K562 (cell line): ENCODE measurements at regions of chr12 and their contacts with region 1.

Region 1: DNA sequence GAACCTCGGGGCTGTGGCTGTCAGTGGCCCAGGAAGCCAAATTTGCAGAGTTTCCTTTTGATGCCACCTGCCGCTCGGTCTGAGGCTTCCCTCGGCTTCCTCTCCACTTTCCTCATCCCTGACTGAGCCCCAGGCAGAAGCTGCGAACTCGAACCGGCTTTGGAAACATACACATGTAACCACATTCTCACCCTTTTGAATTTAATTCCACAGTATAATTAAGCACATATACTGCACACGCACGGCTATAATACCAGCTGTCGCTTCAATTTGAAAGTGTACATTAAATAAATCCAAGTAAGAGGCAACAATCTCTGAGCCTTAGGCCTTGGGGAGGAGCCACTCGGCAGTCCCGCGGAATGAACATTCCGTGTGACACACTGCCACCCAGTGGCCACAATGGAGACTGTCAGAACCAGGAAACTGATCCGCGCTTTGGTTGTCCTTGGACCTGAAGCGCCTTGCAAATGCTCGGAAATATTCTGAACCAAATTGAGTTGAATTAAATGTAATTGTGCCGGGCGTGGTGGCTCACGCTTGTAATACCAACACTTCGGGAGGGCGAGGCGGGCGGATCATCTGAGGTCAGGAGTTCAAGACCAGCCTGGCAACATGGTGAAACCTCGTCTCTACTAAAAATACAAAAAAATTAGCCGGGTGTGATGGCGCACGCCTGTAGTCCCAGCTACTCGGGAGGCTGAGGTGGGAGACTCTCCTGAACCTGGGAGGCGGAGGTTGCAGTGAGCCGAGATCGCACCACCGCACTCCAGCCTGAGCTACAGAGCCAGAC is 117.9 kb upstream of the TMPO start:
- DNase-seq: peak; percentile 76 to 85 (median 80)
- ATAC-seq: peak; percentile 94
- H3K4me3 ChIP-seq: no peak overlapping the region
- H3K27ac ChIP-seq: no peak overlapping the region
- H3K4me1 ChIP-seq: peaks cover 0 to 14% of the 10 kb centered on the region in 2 experiments; a peak in 3 of 5 replicates
- H3K27me3 ChIP-seq: no peaks in the 10 kb centered on the region
- CTCF ChIP-seq: peak; percentile 85 to 92 (median 90)
- EP300 ChIP-seq: no peak
- POLR2A ChIP-seq: no peak
- RAD21 ChIP-seq: peak; percentile 79 to 87

Region 2: DNA sequence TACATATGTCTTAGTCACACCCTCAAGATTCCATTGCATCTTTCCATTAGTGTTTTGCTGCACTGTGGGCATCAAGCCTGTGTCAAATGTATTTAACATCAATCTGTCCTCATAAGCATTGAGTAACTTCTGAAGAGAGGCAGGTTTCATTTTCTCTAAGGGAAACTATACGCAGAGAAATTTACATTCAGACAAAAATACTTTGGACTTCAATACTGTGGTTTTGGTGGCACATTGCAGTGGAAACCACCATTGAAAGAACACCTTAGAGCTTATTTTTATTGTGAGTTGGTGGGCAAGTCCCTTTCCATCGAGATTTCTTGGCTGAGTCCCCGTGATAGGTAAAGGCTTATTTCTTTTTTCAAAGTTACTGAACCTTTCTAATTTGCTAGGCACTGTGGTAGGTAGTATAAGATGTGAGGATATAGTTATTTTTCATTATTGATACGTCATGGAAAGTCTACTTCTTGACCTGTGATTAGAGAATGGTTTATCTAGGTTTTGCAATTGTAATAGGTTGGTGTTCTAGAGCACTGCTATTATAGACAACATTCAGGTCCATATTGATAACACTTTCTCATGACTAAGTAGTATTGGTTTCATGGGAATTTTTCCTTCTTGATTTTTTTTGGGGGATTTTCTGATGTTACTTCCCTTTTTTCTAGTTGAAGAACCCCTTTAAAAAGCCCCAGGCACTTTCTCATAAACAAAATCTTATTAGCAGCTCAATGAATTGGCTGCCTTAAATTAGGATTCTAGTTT is 1826.2 kb before region 1 on chr12:
- CTCF ChIA-PET with region 1: no interaction called
- POLR2A ChIA-PET with region 1: no interaction called
- in situ Hi-C with region 1: loop called (anchors 25 kb)
- intact Hi-C with region 1: no loop called
- DNase-seq: no peak
- ATAC-seq: no peak
- H3K4me3 ChIP-seq: no peak overlapping the region
- H3K27ac ChIP-seq: no peak overlapping the region
- H3K4me1 ChIP-seq: no peaks in the 10 kb centered on the region
- H3K27me3 ChIP-seq: no peaks in the 10 kb centered on the region
- CTCF ChIP-seq: no peak
- EP300 ChIP-seq: no peak
- POLR2A ChIP-seq: no peak
- RAD21 ChIP-seq: no peak

Region 3: DNA sequence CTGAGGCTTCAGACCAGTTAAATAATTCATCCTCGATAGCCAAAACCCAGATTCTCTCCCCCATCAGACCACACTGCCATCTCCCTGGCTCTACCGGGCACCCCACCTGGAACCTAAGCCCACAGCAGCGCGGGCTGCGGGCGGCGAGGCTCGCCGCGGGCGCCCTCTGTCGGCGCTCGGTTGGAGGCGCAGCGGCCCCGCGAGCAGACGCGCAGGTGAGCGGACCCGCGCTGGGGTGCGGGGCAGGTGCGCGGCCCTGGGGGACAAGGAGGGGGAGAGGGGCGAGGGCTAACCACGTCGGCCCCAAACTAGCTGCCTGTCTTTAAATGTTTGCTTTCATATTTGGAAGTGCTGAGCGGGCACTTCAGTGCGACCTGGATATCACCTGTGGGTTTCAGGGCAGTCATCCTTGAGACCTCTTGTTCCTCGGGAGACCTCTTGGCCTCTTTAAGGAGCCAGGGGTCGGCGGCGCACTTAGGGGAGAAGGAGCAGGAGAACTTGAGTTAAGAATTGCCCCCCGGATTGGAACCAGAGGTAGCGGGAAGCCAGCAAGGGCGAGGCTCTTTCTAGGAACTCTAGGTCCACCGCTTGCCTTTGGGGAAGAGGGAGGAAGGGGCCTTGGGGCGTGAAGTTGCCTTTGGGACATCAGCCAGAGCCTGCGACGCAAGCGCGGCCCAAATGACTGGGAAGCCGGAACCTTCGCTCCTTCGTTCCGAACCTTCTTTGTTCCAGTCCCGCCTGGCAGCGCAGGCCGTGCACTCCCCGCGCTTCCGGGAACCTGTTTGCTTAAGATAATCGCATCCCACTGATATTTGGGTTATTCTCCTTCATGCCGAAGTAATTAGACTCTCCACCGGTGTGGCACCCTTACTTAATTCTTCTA is 1411.8 kb before region 1 on chr12:
- CTCF ChIA-PET with region 1: interaction called, 10 read pairs
- POLR2A ChIA-PET with region 1: no interaction called
- in situ Hi-C with region 1: loop called (anchors 10 kb)
- intact Hi-C with region 1: loop called (anchors 2 kb)
- DNase-seq: peak; percentile 37 to 69 (median 57)
- ATAC-seq: peak; percentile 92
- H3K4me3 ChIP-seq: peak overlapping the region; percentile 15; the same call in 1 of the 2 replicates
- H3K27ac ChIP-seq: no peak overlapping the region
- H3K4me1 ChIP-seq: peaks cover 9 to 11% of the 10 kb centered on the region in 2 experiments
- H3K27me3 ChIP-seq: peaks cover 0 to 6% of the 10 kb centered on the region in 2 experiments; a peak in 2 of 5 replicates
- CTCF ChIP-seq: peak; percentile 62 to 83 (median 75)
- EP300 ChIP-seq: no peak
- POLR2A ChIP-seq: no peak
- RAD21 ChIP-seq: peak; percentile 50 to 72

Region 4: GRCh38 chr12:97308576-97309198 is 1088.8 kb before region 1 on chr12:
- CTCF ChIA-PET with region 1: no interaction called
- POLR2A ChIA-PET with region 1: no interaction called
- in situ Hi-C with region 1: loop called (anchors 25 kb)
- intact Hi-C with region 1: no loop called
- DNase-seq: peak; percentile 8 to 50 (median 22)
- ATAC-seq: no peak
- H3K4me3 ChIP-seq: no peak overlapping the region
- H3K27ac ChIP-seq: no peak overlapping the region
- H3K4me1 ChIP-seq: no peaks in the 10 kb centered on the region
- H3K27me3 ChIP-seq: no peaks in the 10 kb centered on the region
- CTCF ChIP-seq: peak; percentile 11 to 51 (median 36); a peak in 3 of 6 replicates
- EP300 ChIP-seq: no peak
- POLR2A ChIP-seq: no peak
- RAD21 ChIP-seq: peak; percentile 49 to 53

Region 5: DNA sequence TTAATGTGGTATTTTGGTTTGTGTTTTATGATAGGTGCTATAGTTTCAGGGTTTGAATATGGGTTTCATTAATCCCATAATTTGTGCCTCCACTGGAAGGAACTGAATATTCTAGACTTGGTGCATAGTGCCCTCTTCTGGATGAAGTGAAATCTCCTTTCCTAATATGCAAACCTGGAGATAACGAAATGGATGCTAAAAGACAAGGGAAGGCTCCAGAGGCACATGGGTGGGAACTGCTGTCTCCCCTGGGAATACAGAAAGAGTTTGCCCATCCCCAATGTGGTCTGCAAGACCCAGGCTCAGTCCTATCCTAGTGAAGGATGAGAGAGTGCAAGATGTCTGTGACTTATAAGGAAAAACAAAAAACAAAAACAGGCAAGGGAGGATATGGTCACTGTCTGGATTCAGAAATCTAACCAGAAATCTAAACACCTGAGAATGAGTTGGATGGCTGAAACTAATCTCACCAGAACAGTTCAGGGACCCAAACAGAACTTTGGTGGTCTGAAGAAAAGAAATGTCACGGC is 24.4 kb before region 1 on chr12:
- CTCF ChIA-PET with region 1: interaction called, 3 read pairs
- POLR2A ChIA-PET with region 1: no interaction called
- in situ Hi-C with region 1: no loop called
- intact Hi-C with region 1: loop called (anchors 2 kb)
- DNase-seq: peak; percentile 26 to 65 (median 38)
- ATAC-seq: peak; percentile 90
- H3K4me3 ChIP-seq: no peak overlapping the region
- H3K27ac ChIP-seq: no peak overlapping the region
- H3K4me1 ChIP-seq: no peaks in the 10 kb centered on the region; a peak in 1 of 5 replicates
- H3K27me3 ChIP-seq: no peaks in the 10 kb centered on the region
- CTCF ChIP-seq: peak; percentile 55 to 77 (median 56); a peak in 5 of 6 replicates
- EP300 ChIP-seq: no peak
- POLR2A ChIP-seq: no peak
- RAD21 ChIP-seq: peak; percentile 68 to 86

Region 6: DNA sequence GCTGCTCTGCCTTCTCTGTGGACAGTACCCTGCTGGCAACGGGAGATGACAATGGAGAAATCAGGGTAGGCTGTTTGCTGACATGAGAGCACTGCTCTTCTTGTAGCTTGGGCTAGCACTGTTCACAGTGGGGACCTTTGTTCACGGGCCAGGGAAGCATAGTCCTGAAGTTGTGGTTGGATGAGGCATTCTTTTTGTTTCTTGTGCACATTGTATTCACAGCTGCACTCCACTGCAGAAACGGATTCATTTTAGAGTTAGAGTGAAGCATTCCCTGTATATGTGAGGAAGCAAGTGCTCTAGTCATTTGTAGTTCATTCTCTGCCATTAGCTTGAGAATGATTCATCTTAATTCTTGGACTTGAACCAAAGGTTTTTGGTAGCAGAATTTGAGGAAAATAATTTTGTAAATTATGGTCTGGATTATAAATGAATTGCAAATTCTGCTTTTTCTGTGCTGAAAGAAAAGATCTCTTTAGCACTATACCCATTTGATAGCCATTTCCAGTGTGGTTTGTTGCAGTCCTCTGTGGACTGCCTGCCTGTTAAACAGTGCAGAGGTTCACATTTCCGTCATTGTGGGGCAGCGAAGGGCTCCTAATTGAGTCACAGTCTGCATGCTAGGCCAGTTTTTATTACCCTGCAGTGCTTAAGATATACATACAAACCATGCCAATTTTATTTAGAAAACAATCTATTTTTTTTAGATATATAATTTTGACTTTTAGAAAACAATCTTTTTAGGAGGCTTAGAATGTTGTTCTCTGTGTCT is 328.2 kb after region 1 on chr12:
- CTCF ChIA-PET with region 1: no interaction called
- POLR2A ChIA-PET with region 1: no interaction called
- in situ Hi-C with region 1: no loop called
- intact Hi-C with region 1: no loop called
- DNase-seq: peak in 3 of 4 experiments; percentile 20 to 54 (median 48)
- ATAC-seq: peak; percentile 94
- H3K4me3 ChIP-seq: no peak overlapping the region
- H3K27ac ChIP-seq: no peak overlapping the region
- H3K4me1 ChIP-seq: 0 out of 5 replicates have a peak, but pooled peaks cover 0 to 3% of the 10 kb centered on the region in 2 experiments
- H3K27me3 ChIP-seq: no peaks in the 10 kb centered on the region
- CTCF ChIP-seq: peak; percentile 46 to 61 (median 52); a peak in 5 of 6 replicates
- EP300 ChIP-seq: no peak
- POLR2A ChIP-seq: no peak
- RAD21 ChIP-seq: peak; percentile 43 to 67